ENCODE measurements at regions of chr1 and their contacts with region 1.

Region 1: DNA sequence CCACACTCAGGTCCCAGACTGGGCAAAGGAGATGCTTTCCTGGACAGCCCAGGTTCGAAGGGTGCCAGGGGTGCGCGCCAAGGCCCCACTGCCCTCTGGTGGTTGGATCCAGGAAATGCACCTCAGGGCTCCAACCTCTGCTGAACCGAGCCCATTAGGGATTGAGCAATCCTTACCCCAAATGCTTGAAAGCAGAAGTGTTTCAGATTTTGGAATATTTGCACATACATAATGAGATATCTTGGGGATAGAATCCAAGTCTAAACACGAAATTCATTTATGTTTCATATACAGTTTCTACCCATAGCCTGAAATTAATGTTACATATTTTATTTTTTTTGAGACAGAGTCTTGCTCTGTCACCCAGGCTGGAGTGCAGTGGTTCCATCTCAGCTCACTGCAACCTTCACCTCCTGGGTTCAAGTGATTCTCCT is 57.4 kb downstream of the SLC9A1 start:
- DNase-seq: peak; percentile 86 to 90 (median 88)
- ATAC-seq: peak; percentile 84
- H3K4me3 ChIP-seq: no peak overlapping the region
- H3K27ac ChIP-seq: no peak overlapping the region
- H3K4me1 ChIP-seq: peaks cover 18 to 41% of the 10 kb centered on the region in 2 experiments
- H3K27me3 ChIP-seq: no peaks in the 10 kb centered on the region; a peak in 1 of 5 replicates
- CTCF ChIP-seq: peak; percentile 98 to 99 (median 99)
- EP300 ChIP-seq: no peak; the same call in 1 of the 2 replicates
- POLR2A ChIP-seq: no peak
- RAD21 ChIP-seq: peak; percentile 100

Region 2: DNA sequence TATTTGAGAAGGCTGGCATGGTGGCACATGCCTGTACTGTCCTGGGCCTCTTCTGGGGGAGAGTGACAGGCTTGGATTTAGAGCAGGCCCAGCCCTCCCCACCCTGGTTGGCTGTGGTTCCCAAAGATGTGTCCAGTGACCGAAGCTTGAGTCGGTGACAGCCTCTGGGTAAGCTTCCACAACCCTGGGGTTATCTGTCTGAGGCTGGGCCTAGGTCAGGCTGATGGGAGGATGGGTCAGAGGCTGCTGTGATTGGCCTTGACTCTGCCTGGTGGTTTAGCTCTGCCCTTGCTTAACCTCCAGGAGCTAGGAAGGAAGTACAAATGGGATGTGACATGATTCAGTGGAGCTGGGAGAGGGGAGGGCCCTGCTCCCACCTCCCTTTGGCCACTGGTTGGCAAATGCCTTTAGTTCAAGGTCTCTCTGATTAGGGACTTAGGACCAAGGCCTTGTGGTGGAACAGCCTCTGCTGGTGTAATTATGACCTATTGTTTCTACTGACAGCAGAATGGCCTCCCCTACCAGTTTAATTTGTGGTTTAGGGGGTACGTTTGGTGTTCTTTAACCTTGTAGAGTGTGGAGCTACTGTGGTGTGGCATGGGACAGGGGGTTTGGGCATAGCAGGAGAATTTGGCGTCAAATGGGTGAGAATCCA is 159.4 kb before region 1 on chr1:
- CTCF ChIA-PET with region 1: no interaction called
- POLR2A ChIA-PET with region 1: no interaction called
- in situ Hi-C with region 1: no loop called
- intact Hi-C with region 1: no loop called
- DNase-seq: peak in 1 of 4 experiments; percentile 48
- ATAC-seq: peak; percentile 71
- H3K4me3 ChIP-seq: no peak overlapping the region
- H3K27ac ChIP-seq: no peak overlapping the region
- H3K4me1 ChIP-seq: no peaks in the 10 kb centered on the region; a peak in 1 of 5 replicates
- H3K27me3 ChIP-seq: no peaks in the 10 kb centered on the region
- CTCF ChIP-seq: no peak
- EP300 ChIP-seq: no peak
- POLR2A ChIP-seq: no peak
- RAD21 ChIP-seq: no peak

Region 3: GRCh38 chr1:26961826-26962225 is 135.7 kb before region 1 on chr1:
- CTCF ChIA-PET with region 1: interaction called, 16 read pairs
- POLR2A ChIA-PET with region 1: no interaction called
- in situ Hi-C with region 1: no loop called
- intact Hi-C with region 1: loop called (anchors 2 kb)
- DNase-seq: no peak
- ATAC-seq: no peak
- H3K4me3 ChIP-seq: no peak overlapping the region
- H3K27ac ChIP-seq: no peak overlapping the region
- H3K4me1 ChIP-seq: peaks cover 9 to 14% of the 10 kb centered on the region in 2 experiments; a peak in 4 of 5 replicates
- H3K27me3 ChIP-seq: peaks cover 5 to 21% of the 10 kb centered on the region in 2 experiments; a peak in 4 of 5 replicates
- CTCF ChIP-seq: no peak
- EP300 ChIP-seq: no peak
- POLR2A ChIP-seq: no peak
- RAD21 ChIP-seq: no peak